SK-N-SH (cell line): ENCODE measurements at regions of chr1 and their contacts with region 1.

Region 1: GRCh38 chr1:161098210-161099068 is at the start of gene KLHDC9:
- DNase-seq: peak; percentile 92
- H3K4me3 ChIP-seq: peak within 1 kb of the TSS; percentile 58
- H3K27ac ChIP-seq: peak within 1 kb of the TSS in 1 of 2 experiments; percentile 51; a peak in 2 of 4 replicates
- H3K4me1 ChIP-seq: peaks cover 0 to 7% of the 10 kb centered on the region in 2 experiments; a peak in 1 of 4 replicates
- H3K27me3 ChIP-seq: no peaks in the 10 kb centered on the region
- CTCF ChIP-seq: no peak
- EP300 ChIP-seq: no peak
- RAD21 ChIP-seq: no peak
- polyA plus RNA-seq, gene KLHDC9: 4.4 and 4.7 TPM in 2 replicates

Region 2: GRCh38 chr1:160997323-160998038 is 101.0 kb before region 1 on chr1:
- CTCF ChIA-PET with region 1: interaction called, 30 read pairs
- POLR2A ChIA-PET with region 1: no interaction called
- DNase-seq: peak; percentile 40
- H3K4me3 ChIP-seq: no peak overlapping the region
- H3K27ac ChIP-seq: no peak overlapping the region
- H3K4me1 ChIP-seq: peaks cover 0 to 4% of the 10 kb centered on the region in 2 experiments; a peak in 2 of 4 replicates
- H3K27me3 ChIP-seq: no peaks in the 10 kb centered on the region
- CTCF ChIP-seq: peak; percentile 38
- EP300 ChIP-seq: no peak
- RAD21 ChIP-seq: peak; percentile 37

Region 3: GRCh38 chr1:161038523-161039153 is 59.8 kb before region 1 on chr1 and contains the start of gene TSTD1:
- CTCF ChIA-PET with region 1: interaction called, 43 read pairs
- POLR2A ChIA-PET with region 1: no interaction called
- DNase-seq: peak; percentile 80
- H3K4me3 ChIP-seq: peak within 1 kb of the TSS; percentile 55 to 60
- H3K27ac ChIP-seq: peak within 1 kb of the TSS in 1 of 2 experiments; percentile 54; a peak in 1 of 4 replicates
- H3K4me1 ChIP-seq: peaks cover 0 to 4% of the 10 kb centered on the region in 2 experiments; a peak in 1 of 4 replicates
- H3K27me3 ChIP-seq: no peaks in the 10 kb centered on the region
- CTCF ChIP-seq: no peak
- EP300 ChIP-seq: no peak
- RAD21 ChIP-seq: no peak
- polyA plus RNA-seq, gene TSTD1: 80.7 and 93.9 TPM in 2 replicates

Region 4: DNA sequence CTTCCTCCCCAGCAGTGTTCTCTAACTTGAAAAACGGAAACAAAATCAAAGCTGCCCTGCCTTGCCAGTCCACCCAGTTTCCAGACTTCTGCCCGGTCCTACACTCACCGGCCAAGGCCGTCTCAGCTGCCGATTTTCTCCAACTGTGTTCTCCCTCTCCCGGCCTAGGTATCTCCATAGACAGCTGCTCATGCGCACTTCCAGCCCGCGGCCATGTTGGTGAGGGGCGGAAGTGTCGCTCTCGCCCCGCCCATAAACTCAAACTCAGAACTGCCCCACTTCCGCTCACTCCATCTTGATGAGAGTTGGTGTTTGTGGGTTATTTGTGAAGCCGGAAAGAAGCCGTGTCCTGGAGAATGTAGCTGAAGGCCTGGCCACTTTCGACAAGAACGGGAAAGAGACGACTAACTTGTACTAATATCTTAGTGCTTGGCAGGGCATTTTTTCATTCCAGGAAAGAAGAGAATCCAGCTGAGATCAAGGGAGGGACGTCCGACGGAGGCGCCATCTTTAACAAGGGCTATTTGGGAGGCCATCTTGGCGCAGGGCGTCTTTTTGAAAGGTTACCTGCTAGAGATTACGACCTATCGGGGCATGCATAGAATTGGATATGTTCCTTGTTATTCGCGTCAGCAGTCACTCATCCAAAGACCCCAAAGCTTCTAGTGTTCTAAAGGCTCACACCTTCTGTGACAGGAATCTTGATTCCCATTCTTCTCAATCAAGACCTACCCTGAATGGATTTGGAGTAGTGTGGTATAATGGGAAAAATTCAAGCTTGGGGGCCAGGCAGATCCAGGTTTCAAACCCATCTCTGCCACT is 52.5 kb before region 1 on chr1 and contains the start of gene USF1:
- CTCF ChIA-PET with region 1: interaction called, 43 read pairs
- POLR2A ChIA-PET with region 1: interaction called, 15 read pairs
- DNase-seq: peak; percentile 93
- H3K4me3 ChIP-seq: peak within 1 kb of the TSS; percentile 69 to 75
- H3K27ac ChIP-seq: peak within 1 kb of the TSS; percentile 93 to 99
- H3K4me1 ChIP-seq: peaks cover 0 to 7% of the 10 kb centered on the region in 2 experiments; a peak in 2 of 4 replicates
- H3K27me3 ChIP-seq: no peaks in the 10 kb centered on the region
- CTCF ChIP-seq: no peak
- EP300 ChIP-seq: no peak
- RAD21 ChIP-seq: no peak
- polyA plus RNA-seq, gene USF1: 43.1 and 61.9 TPM in 2 replicates

Region 5: GRCh38 chr1:161071886-161072371 is 26.5 kb before region 1 on chr1:
- CTCF ChIA-PET with region 1: interaction called, 198 read pairs
- POLR2A ChIA-PET with region 1: no interaction called
- DNase-seq: peak; percentile 76
- H3K4me3 ChIP-seq: no peak overlapping the region
- H3K27ac ChIP-seq: no peak overlapping the region
- H3K4me1 ChIP-seq: no peaks in the 10 kb centered on the region
- H3K27me3 ChIP-seq: no peaks in the 10 kb centered on the region
- CTCF ChIP-seq: peak; percentile 65
- EP300 ChIP-seq: no peak
- RAD21 ChIP-seq: peak; percentile 49

Region 6: GRCh38 chr1:161132410-161133219 is 34.2 kb after region 1 on chr1 and contains the start of gene DEDD:
- CTCF ChIA-PET with region 1: interaction called, 21 read pairs
- POLR2A ChIA-PET with region 1: interaction called, 3 read pairs
- DNase-seq: peak; percentile 94
- H3K4me3 ChIP-seq: peak within 1 kb of the TSS; percentile 54 to 74
- H3K27ac ChIP-seq: peak within 1 kb of the TSS; percentile 91 to 96
- H3K4me1 ChIP-seq: peaks cover 5 to 13% of the 10 kb centered on the region in 2 experiments; a peak in 3 of 4 replicates
- H3K27me3 ChIP-seq: no peaks in the 10 kb centered on the region
- CTCF ChIP-seq: no peak
- EP300 ChIP-seq: peak in 1 of 2 experiments; percentile 44; a peak in 1 of 4 replicates
- RAD21 ChIP-seq: no peak
- polyA plus RNA-seq, gene DEDD: 43.1 and 45.0 TPM in 2 replicates

Region 7: GRCh38 chr1:161139765-161140164 is 41.3 kb after region 1 on chr1:
- CTCF ChIA-PET with region 1: interaction called, 21 read pairs
- POLR2A ChIA-PET with region 1: no interaction called
- DNase-seq: peak; percentile 64
- H3K4me3 ChIP-seq: no peak overlapping the region
- H3K27ac ChIP-seq: no peak overlapping the region
- H3K4me1 ChIP-seq: no peaks in the 10 kb centered on the region
- H3K27me3 ChIP-seq: no peaks in the 10 kb centered on the region
- CTCF ChIP-seq: peak; percentile 71
- EP300 ChIP-seq: no peak
- RAD21 ChIP-seq: peak; percentile 70